Gastrocnemius medialis (tissue), 4 donors: ENCODE measurements at regions of chr9 and their contacts with region 1.

Region 1: GRCh38 chr9:14314929-14315645 is 1.1 kb upstream of the NFIB start:
- DNase-seq: peak; percentile 91 to 95
- ATAC-seq: peak; percentile 43 to 51
- H3K4me3 ChIP-seq: peak overlapping the region; percentile 81 to 91 (median 86)
- H3K27ac ChIP-seq: peak overlapping the region; percentile 92 to 99 (median 98)
- H3K4me1 ChIP-seq: peaks cover 40 to 43% of the 10 kb centered on the region in 2 donors
- H3K27me3 ChIP-seq: no peaks in the 10 kb centered on the region
- CTCF ChIP-seq: peak in 2 of 5 experiments; percentile 15 to 22
- POLR2A ChIP-seq: peak; percentile 88 to 92

Region 2: DNA sequence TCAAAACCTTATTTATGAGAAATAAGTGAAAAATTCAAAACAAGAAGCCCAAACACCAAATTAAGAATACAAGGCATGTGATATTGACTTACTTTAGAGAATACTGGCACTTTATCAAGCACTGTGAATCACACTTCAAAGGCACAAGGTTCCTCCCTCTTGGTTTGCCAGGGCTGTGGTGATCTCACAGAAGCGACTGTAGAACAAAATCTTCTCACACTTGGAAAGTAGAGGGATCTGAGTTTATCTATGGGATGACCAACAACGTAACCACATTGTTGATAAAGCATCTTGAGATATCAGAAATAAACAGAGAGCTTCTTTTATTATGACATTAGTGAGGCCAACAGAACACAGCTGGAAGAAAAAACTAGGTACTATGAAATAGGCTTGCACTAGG is 297.0 kb before region 1 on chr9:
- in situ Hi-C with region 1: loop called in 2 of 4 experiments (anchors 10 to 25 kb)
- intact Hi-C with region 1: loop called (anchors 5 kb)
- DNase-seq: peak in 1 of 2 donors; percentile 45
- ATAC-seq: peak; percentile 34 to 56
- H3K4me3 ChIP-seq: no peak overlapping the region
- H3K27ac ChIP-seq: peak overlapping the region; percentile 21 to 70 (median 38)
- H3K4me1 ChIP-seq: peaks cover 20 to 32% of the 10 kb centered on the region in 2 donors
- H3K27me3 ChIP-seq: no peaks in the 10 kb centered on the region
- CTCF ChIP-seq: no peak
- POLR2A ChIP-seq: no peak

Region 3: DNA sequence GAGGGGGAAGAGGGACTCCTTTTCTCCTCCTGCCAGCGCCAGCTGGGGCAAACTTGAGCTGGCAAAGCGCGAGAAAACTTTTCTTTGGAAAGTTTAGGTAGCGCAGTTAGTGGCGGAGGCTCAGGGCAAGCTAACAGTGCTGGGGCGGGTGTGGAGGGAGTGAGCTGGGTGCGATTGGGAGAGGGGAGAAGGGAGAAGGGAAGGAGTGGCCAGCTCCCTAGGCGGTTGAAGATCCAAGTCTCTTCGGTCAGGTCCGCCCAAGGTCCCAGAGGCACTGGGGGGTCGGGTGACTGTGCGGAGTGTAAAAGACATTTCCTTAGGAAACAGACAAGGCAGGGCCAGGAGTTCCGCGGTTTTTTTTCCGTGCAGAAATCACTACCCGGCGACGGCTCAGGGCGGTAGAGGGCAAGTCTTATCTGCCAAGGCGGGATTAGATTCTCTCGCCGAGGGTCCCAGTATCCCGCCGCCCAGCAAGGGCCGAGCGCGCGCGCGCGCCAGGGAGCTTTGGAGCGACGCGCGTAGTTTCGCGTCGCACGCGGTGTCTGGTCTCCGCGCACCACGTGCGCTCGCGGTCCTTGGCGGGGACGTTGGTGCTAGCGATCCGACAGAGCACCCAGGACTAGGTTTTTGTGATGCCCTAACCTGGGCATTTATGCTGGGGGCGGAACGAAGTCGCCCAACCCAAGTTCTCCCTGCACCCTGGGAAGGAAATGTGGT is 32.5 kb after region 1 on chr9:
- in situ Hi-C with region 1: no loop called
- intact Hi-C with region 1: loop called (anchors 5 kb)
- DNase-seq: peak; percentile 45 to 64
- ATAC-seq: peak; percentile 53 to 67
- H3K4me3 ChIP-seq: peak overlapping the region; percentile 65 to 78 (median 70)
- H3K27ac ChIP-seq: peak overlapping the region; percentile 84 to 90 (median 87)
- H3K4me1 ChIP-seq: peaks cover 24 to 42% of the 10 kb centered on the region in 2 donors
- H3K27me3 ChIP-seq: no peaks in the 10 kb centered on the region
- CTCF ChIP-seq: peak in 1 of 5 experiments; percentile 35
- POLR2A ChIP-seq: peak; percentile 68 to 73